PC-9 (cell line): ENCODE measurements at regions of chr5 and their contacts with region 1.

Region 1: DNA sequence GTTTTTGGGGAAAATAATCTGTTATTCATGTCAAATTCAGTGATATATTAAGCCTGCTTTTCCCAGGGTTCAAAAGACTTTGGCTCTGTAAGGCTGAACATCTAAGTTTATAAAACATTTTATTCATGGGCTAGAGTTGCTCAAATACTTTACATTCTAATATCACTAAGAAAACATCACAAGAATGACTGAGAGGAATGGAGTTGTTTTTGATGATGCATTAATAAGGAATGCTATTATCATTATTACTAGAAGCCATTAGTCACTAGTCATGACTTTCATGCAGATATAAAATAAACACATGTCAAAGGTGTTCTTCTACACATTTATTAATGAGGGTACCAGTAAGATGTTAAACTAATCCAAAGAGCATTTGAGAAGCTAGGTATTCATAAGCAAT is 185.5 kb upstream of the KCNN2 start:
- DNase-seq: peak in 1 of 2 experiments; percentile 38
- H3K4me3 ChIP-seq: no peak overlapping the region
- H3K27ac ChIP-seq: no peak overlapping the region
- H3K4me1 ChIP-seq: no peaks in the 10 kb centered on the region
- H3K27me3 ChIP-seq: no peaks in the 10 kb centered on the region
- CTCF ChIP-seq: no peak

Region 2: DNA sequence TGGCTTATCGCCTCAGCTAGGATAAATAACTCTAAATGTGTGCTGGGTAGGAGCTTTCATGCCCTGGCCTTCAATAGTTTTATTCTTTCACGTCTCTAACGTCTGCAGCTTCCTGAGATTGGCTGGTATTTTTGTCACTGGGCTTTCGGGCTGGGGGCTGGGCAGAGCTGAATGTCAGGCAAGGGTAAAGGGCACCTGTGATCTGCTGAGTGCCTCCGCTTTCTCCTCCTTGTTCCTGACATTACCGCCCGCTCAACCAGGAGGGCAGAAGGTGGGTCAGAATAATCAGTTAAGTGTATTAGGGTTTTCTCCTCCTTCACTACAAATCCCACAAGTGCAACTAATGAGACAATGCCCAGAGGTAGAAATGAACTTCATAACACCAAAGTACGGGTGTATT is 958.2 kb before region 1 on chr5:
- CTCF ChIA-PET with region 1: no interaction called
- POLR2A ChIA-PET with region 1: interaction called, 21 read pairs
- intact Hi-C with region 1: no loop called
- DNase-seq: no peak
- H3K4me3 ChIP-seq: no peak overlapping the region
- H3K27ac ChIP-seq: no peak overlapping the region
- H3K4me1 ChIP-seq: peaks cover 6% of the 10 kb centered on the region; the same call in 1 of the 2 replicates
- H3K27me3 ChIP-seq: no peaks in the 10 kb centered on the region
- CTCF ChIP-seq: no peak

Region 3: GRCh38 chr5:114192108-114192507 is 15.8 kb after region 1 on chr5:
- CTCF ChIA-PET with region 1: no interaction called
- POLR2A ChIA-PET with region 1: no interaction called
- intact Hi-C with region 1: no loop called
- DNase-seq: no peak
- H3K4me3 ChIP-seq: no peak overlapping the region
- H3K27ac ChIP-seq: no peak overlapping the region
- H3K4me1 ChIP-seq: no peaks in the 10 kb centered on the region
- H3K27me3 ChIP-seq: no peaks in the 10 kb centered on the region
- CTCF ChIP-seq: no peak